GM23248 (cell line): ENCODE measurements at regions of chr16 and their contacts with region 1.

Region 1: GRCh38 chr16:22857296-22858025 is 43.5 kb downstream of the HS3ST2 start:
- DNase-seq: no peak
- H3K4me3 ChIP-seq: no peak overlapping the region
- H3K27ac ChIP-seq: no peak overlapping the region
- H3K4me1 ChIP-seq: no peaks in the 10 kb centered on the region
- H3K27me3 ChIP-seq: no peaks in the 10 kb centered on the region

Region 2: DNA sequence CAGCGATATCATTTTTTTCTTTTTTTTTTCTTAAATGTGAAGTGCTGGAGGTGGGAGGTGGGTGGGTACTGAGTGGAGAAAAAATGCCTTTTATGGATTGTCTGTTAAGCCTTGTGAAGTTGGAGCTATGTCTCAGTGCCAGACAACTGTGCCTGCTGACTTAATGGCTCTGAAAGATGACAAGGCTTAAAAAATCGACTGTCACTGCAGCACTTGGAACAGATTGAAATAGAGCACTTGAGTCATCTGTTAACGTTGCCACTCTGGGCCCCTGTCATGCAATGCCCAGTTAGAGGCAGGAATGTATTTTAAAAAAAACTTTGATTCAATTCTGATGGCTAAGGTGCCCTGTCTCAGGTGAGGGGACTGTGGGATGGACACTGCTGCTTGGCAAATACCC is 151.7 kb before region 1 on chr16:
- in situ Hi-C with region 1: loop called (anchors 10 kb)
- DNase-seq: no peak
- H3K4me3 ChIP-seq: no peak overlapping the region
- H3K27ac ChIP-seq: no peak overlapping the region
- H3K4me1 ChIP-seq: no peaks in the 10 kb centered on the region
- H3K27me3 ChIP-seq: no peaks in the 10 kb centered on the region; the same call in 1 of the 2 replicates

Region 3: GRCh38 chr16:22763437-22764080 is 93.9 kb before region 1 on chr16:
- in situ Hi-C with region 1: no loop called
- DNase-seq: no peak
- H3K4me3 ChIP-seq: no peak overlapping the region
- H3K27ac ChIP-seq: no peak overlapping the region
- H3K4me1 ChIP-seq: no peaks in the 10 kb centered on the region
- H3K27me3 ChIP-seq: no peaks in the 10 kb centered on the region